Activated naive CD4-positive, alpha-beta T cell treated with anti-CD3 and anti-CD28 coated beads for 36 hours (primary cell): ENCODE measurements at regions of chrX and their contacts with region 1.

Region 1: GRCh38 chrX:56281789-56282188 is 49.6 kb downstream of the KLF8 start:
- DNase-seq: peak; percentile 32
- H3K4me3 Mint-ChIP-seq: no peak overlapping the region
- H3K27ac Mint-ChIP-seq: no peak overlapping the region
- H3K4me1 Mint-ChIP-seq: peaks cover 10% of the 10 kb centered on the region
- H3K27me3 Mint-ChIP-seq: no peaks in the 10 kb centered on the region

Region 2: GRCh38 chrX:56382278-56382677 is 100.5 kb after region 1 on chrX:
- CTCF ChIA-PET with region 1: interaction called, 3 read pairs
- intact Hi-C with region 1: loop called (anchors 1 kb)
- DNase-seq: peak; percentile 41
- H3K4me3 Mint-ChIP-seq: no peak overlapping the region
- H3K27ac Mint-ChIP-seq: peak overlapping the region; percentile 82
- H3K4me1 Mint-ChIP-seq: peaks cover 44% of the 10 kb centered on the region
- H3K27me3 Mint-ChIP-seq: no peaks in the 10 kb centered on the region

Region 3: GRCh38 chrX:56462389-56462788 is 180.6 kb after region 1 on chrX:
- CTCF ChIA-PET with region 1: no interaction called
- intact Hi-C with region 1: loop called (anchors 10 kb)
- DNase-seq: no peak
- H3K4me3 Mint-ChIP-seq: no peak overlapping the region
- H3K27ac Mint-ChIP-seq: no peak overlapping the region
- H3K4me1 Mint-ChIP-seq: peaks cover 24% of the 10 kb centered on the region
- H3K27me3 Mint-ChIP-seq: no peaks in the 10 kb centered on the region

Region 4: GRCh38 chrX:56802921-56803849 is 521.4 kb after region 1 on chrX:
- CTCF ChIA-PET with region 1: no interaction called
- intact Hi-C with region 1: loop called (anchors 2 kb)
- DNase-seq: peak; percentile 71
- H3K4me3 Mint-ChIP-seq: peak overlapping the region; percentile 32
- H3K27ac Mint-ChIP-seq: no peak overlapping the region
- H3K4me1 Mint-ChIP-seq: peaks cover 45% of the 10 kb centered on the region
- H3K27me3 Mint-ChIP-seq: no peaks in the 10 kb centered on the region